ENCODE measurements at regions of chr6 and their contacts with region 1.

Region 1: DNA sequence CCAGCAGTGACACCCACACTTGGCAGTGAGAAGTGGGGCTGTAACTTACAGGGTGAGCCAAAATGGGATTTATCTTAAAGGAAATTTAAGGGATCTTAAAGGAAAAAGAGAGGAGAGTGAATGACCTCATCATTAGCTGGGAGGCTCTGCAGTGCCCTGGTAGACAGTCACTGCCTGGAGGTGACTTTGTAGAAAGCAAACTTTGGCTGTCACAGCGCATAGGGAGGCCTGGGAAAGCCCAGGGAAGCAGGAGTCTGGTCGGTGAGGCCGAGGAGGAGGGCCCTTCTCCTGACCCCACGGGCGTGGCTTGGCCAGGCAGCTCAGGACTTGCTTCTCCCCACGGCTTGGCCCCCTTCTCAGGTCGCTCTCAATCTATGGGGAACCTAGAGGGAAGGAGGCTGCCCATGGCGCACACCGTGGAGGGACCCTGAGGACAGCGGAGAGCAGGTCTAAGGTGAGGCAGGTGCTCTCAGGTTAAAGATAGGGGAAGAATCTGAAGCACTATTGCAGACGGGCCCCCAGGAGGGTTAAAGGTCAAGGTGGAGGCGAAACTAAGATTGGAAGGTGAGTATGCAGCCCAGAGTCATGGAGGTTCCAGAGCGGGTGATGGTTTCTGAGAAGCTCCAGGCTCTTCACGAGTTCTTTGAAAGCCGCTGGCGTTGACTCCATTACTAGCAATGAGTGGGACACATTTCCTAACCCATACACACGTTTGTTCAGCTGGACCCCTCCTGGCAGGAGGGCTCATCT is 15.6 kb upstream of the RIPK1 start:
- DNase-seq: no peak
- ATAC-seq: no peak
- H3K4me3 ChIP-seq: no peak overlapping the region
- H3K4me3 Mint-ChIP-seq: peak overlapping the region; percentile 76
- H3K27ac ChIP-seq: no peak overlapping the region
- H3K27ac Mint-ChIP-seq: peak overlapping the region; percentile 72
- H3K4me1 ChIP-seq: peaks cover 5 to 22% of the 10 kb centered on the region in 2 donors
- H3K4me1 Mint-ChIP-seq: peaks cover 13% of the 10 kb centered on the region
- H3K27me3 ChIP-seq: peaks cover 0 to 12% (median 3%) of the 10 kb centered on the region in 4 experiments
- H3K27me3 Mint-ChIP-seq: peaks cover 17% of the 10 kb centered on the region
- CTCF ChIP-seq: no peak

Region 2: GRCh38 chr6:2791124-2791974 is 261.3 kb before region 1 on chr6:
- CTCF ChIA-PET with region 1: interaction called, 13 read pairs
- POLR2A ChIA-PET with region 1: no interaction called
- intact Hi-C with region 1: loop called (anchors 2 kb)
- DNase-seq: peak; percentile 78
- ATAC-seq: peak; percentile 83
- H3K4me3 ChIP-seq: no peak overlapping the region
- H3K4me3 Mint-ChIP-seq: peak overlapping the region; percentile 67
- H3K27ac ChIP-seq: peak overlapping the region in 1 of 2 donors; percentile 18
- H3K27ac Mint-ChIP-seq: peak overlapping the region; percentile 82
- H3K4me1 ChIP-seq: peaks cover 30 to 35% of the 10 kb centered on the region in 2 donors
- H3K4me1 Mint-ChIP-seq: peaks cover 36% of the 10 kb centered on the region
- H3K27me3 ChIP-seq: no peaks in the 10 kb centered on the region
- H3K27me3 Mint-ChIP-seq: no peaks in the 10 kb centered on the region
- CTCF ChIP-seq: peak; percentile 82

Region 3: GRCh38 chr6:2940010-2940850 is 112.4 kb before region 1 on chr6:
- CTCF ChIA-PET with region 1: interaction called, 5 read pairs
- POLR2A ChIA-PET with region 1: no interaction called
- intact Hi-C with region 1: loop called (anchors 5 kb)
- DNase-seq: peak; percentile 72
- ATAC-seq: peak; percentile 59
- H3K4me3 ChIP-seq: peak overlapping the region in 4 of 5 experiments; percentile 5 to 55 (median 42)
- H3K4me3 Mint-ChIP-seq: peak overlapping the region; percentile 86
- H3K27ac ChIP-seq: peak overlapping the region; percentile 31 to 68
- H3K27ac Mint-ChIP-seq: peak overlapping the region; percentile 93
- H3K4me1 ChIP-seq: peaks cover 45 to 62% of the 10 kb centered on the region in 2 donors
- H3K4me1 Mint-ChIP-seq: peaks cover 70% of the 10 kb centered on the region
- H3K27me3 ChIP-seq: no peaks in the 10 kb centered on the region
- H3K27me3 Mint-ChIP-seq: no peaks in the 10 kb centered on the region
- CTCF ChIP-seq: no peak

Region 4: GRCh38 chr6:2999618-3000557 is 52.8 kb before region 1 on chr6 and contains the start of gene NQO2:
- CTCF ChIA-PET with region 1: interaction called, 83 read pairs
- POLR2A ChIA-PET with region 1: interaction called, 13 read pairs
- intact Hi-C with region 1: loop called (anchors 1 kb)
- DNase-seq: peak; percentile 92
- ATAC-seq: peak; percentile 88
- H3K4me3 ChIP-seq: peak within 1 kb of the TSS; percentile 65 to 91 (median 85)
- H3K4me3 Mint-ChIP-seq: peak within 1 kb of the TSS; percentile 96
- H3K27ac ChIP-seq: peak within 1 kb of the TSS; percentile 65 to 71
- H3K27ac Mint-ChIP-seq: peak within 1 kb of the TSS; percentile 89
- H3K4me1 ChIP-seq: peaks cover 11 to 21% of the 10 kb centered on the region in 2 donors
- H3K4me1 Mint-ChIP-seq: peaks cover 20% of the 10 kb centered on the region
- H3K27me3 ChIP-seq: no peaks in the 10 kb centered on the region
- H3K27me3 Mint-ChIP-seq: no peaks in the 10 kb centered on the region
- CTCF ChIP-seq: no peak
- total RNA-seq, gene NQO2: 17.9 and 21.5 TPM in 2 replicates

Region 5: GRCh38 chr6:3023663-3024483 is 28.8 kb before region 1 on chr6:
- CTCF ChIA-PET with region 1: interaction called, 10 read pairs
- POLR2A ChIA-PET with region 1: interaction called, 10 read pairs
- intact Hi-C with region 1: loop called (anchors 1 kb)
- DNase-seq: peak; percentile 82
- ATAC-seq: peak; percentile 79
- H3K4me3 ChIP-seq: peak overlapping the region; percentile 45 to 88 (median 63)
- H3K4me3 Mint-ChIP-seq: peak overlapping the region; percentile 91
- H3K27ac ChIP-seq: peak overlapping the region; percentile 38 to 50
- H3K27ac Mint-ChIP-seq: peak overlapping the region; percentile 74
- H3K4me1 ChIP-seq: peaks cover 59 to 63% of the 10 kb centered on the region in 2 donors
- H3K4me1 Mint-ChIP-seq: peaks cover 50% of the 10 kb centered on the region
- H3K27me3 ChIP-seq: peaks cover 0 to 4% (median 0%) of the 10 kb centered on the region in 4 experiments
- H3K27me3 Mint-ChIP-seq: peaks cover 5% of the 10 kb centered on the region
- CTCF ChIP-seq: no peak

Region 6: DNA sequence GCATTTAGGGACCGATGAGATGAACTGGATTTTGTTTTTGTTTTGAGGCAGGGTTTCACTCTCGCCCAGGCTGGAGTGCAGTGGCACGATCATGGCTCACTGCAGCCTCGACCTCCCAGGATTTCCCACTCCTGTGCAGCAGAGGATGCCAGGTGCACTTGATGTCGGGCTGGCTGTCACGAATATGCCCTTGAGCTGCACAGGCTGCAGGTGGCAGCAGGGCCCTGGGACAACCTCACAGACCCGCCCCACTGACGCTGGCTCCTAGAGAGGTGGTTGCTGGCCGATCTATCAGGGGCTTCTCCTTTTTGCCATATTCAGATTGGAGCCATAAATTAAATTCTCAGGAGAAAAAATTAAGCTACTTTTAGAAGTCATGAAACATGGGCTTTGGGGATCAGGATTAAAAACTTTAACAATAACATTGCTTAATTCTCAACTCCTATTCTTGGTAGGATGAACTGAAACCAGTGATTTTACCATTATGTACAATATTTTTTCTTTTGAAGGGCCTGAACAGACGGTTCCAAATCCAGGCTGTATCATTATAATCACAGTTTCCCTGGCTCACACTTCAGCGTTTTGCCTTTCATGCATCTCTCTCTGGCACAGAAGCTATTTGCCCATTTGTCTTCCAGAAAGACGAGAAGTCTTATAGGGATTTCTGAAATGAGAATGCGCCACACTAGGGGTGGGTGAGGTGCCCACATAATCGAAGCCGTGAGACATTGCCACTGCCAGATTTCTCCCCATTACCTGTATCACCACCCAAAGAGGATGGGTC is 20.6 kb before region 1 on chr6:
- CTCF ChIA-PET with region 1: interaction called, 26 read pairs
- POLR2A ChIA-PET with region 1: interaction called, 10 read pairs
- intact Hi-C with region 1: loop called (anchors 1 kb)
- DNase-seq: peak; percentile 53
- ATAC-seq: peak; percentile 39
- H3K4me3 ChIP-seq: no peak overlapping the region
- H3K4me3 Mint-ChIP-seq: no peak overlapping the region
- H3K27ac ChIP-seq: no peak overlapping the region
- H3K27ac Mint-ChIP-seq: no peak overlapping the region
- H3K4me1 ChIP-seq: peaks cover 15 to 18% of the 10 kb centered on the region in 2 donors
- H3K4me1 Mint-ChIP-seq: peaks cover 17% of the 10 kb centered on the region
- H3K27me3 ChIP-seq: no peaks in the 10 kb centered on the region
- H3K27me3 Mint-ChIP-seq: peaks cover 32% of the 10 kb centered on the region
- CTCF ChIP-seq: no peak

Region 7: GRCh38 chr6:3068329-3069214 is 15.9 kb after region 1 on chr6 and contains the start of gene RIPK1:
- CTCF ChIA-PET with region 1: interaction called, 15 read pairs
- POLR2A ChIA-PET with region 1: interaction called, 3 read pairs
- intact Hi-C with region 1: loop called (anchors 1 kb)
- DNase-seq: peak; percentile 95
- ATAC-seq: peak; percentile 73
- H3K4me3 ChIP-seq: peak within 1 kb of the TSS; percentile 55 to 87 (median 85)
- H3K4me3 Mint-ChIP-seq: peak within 1 kb of the TSS; percentile 98
- H3K27ac ChIP-seq: peak within 1 kb of the TSS; percentile 92 to 99
- H3K27ac Mint-ChIP-seq: peak within 1 kb of the TSS; percentile 99
- H3K4me1 ChIP-seq: peaks cover 17 to 23% of the 10 kb centered on the region in 2 donors
- H3K4me1 Mint-ChIP-seq: peaks cover 43% of the 10 kb centered on the region
- H3K27me3 ChIP-seq: no peaks in the 10 kb centered on the region
- H3K27me3 Mint-ChIP-seq: no peaks in the 10 kb centered on the region
- CTCF ChIP-seq: no peak
- total RNA-seq, gene RIPK1: 26.2 and 28.1 TPM in 2 replicates

Region 8: DNA sequence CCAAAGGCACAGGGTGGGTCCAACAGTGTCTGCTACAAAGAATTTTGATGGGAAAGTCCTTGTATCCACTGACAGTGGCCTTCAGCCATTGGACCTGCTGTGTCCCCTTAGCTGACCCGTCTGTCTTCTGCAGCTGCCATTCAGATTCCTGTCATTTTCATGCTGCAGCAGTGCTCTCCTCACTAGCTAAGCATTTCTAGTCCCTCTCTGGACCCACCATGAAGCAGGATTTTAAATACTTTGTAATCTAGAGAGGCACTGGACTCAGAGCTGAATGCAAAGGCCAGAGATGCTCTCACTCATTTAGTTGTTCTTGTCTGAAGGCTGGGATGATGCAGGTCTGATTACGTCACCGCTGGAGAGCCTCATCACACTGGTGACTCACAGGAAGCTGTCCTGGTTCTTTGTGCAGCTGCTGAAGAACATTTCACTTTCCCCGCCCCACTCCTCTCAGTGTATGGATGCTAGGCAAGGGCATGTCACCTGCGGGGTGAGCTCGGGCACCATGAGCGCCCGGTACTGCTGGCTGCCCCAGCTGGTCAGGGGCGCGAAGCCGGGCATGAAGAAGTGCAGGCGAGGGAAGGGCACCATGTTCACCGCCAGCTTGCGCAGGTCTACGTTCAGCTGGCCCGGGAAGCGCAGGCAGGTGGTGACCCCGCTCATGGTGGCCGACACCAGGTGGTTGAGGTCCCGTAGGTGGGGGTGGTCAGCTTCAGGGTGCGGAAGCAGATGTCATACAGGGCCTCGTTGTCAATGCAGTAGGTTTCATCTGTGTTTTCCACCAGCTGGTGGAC is 124.1 kb after region 1 on chr6:
- CTCF ChIA-PET with region 1: no interaction called
- POLR2A ChIA-PET with region 1: no interaction called
- intact Hi-C with region 1: no loop called
- DNase-seq: no peak
- ATAC-seq: no peak
- H3K4me3 ChIP-seq: no peak overlapping the region
- H3K4me3 Mint-ChIP-seq: no peak overlapping the region
- H3K27ac ChIP-seq: no peak overlapping the region
- H3K27ac Mint-ChIP-seq: no peak overlapping the region
- H3K4me1 ChIP-seq: no peaks in the 10 kb centered on the region
- H3K4me1 Mint-ChIP-seq: peaks cover 2% of the 10 kb centered on the region
- H3K27me3 ChIP-seq: no peaks in the 10 kb centered on the region
- H3K27me3 Mint-ChIP-seq: peaks cover 11% of the 10 kb centered on the region
- CTCF ChIP-seq: no peak